ENCODE measurements at regions of chr5 and their contacts with region 1.

Region 1: DNA sequence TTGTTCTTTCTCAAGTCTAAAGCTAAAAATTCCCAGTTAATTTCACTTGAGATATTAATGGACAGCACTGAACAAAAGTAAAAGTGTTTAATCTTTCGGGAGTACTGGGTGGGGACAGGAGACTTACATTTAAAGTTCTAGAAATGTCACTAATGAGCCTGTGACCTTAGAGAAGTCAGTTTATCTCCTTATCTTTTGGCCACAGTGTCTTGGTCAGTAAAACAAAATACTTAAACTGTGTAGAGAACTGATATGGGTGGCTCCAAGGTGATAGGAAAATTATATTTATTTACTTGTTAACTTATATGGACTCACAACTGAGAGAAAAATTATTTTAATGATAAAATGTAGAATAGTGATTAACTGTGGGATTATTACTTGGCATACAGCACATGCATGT is 8.9 kb downstream of the IPO11 start:
- DNase-seq: no peak
- CTCF ChIP-seq: no peak

Region 2: GRCh38 chr5:62431735-62432620 is 10.6 kb after region 1 on chr5:
- CTCF ChIA-PET with region 1: interaction called, 11 read pairs
- POLR2A ChIA-PET with region 1: no interaction called
- DNase-seq: no peak
- CTCF ChIP-seq: no peak

Measured in GM10248 (cell line).